Posterior cingulate gyrus (tissue), 11 donors: ENCODE measurements at regions of chrX and their contacts with region 1.

Region 1: GRCh38 chrX:141176586-141177451 is at the start of gene LDOC1:
- DNase-seq: peak; percentile 68 to 97 (median 83)

Region 2: DNA sequence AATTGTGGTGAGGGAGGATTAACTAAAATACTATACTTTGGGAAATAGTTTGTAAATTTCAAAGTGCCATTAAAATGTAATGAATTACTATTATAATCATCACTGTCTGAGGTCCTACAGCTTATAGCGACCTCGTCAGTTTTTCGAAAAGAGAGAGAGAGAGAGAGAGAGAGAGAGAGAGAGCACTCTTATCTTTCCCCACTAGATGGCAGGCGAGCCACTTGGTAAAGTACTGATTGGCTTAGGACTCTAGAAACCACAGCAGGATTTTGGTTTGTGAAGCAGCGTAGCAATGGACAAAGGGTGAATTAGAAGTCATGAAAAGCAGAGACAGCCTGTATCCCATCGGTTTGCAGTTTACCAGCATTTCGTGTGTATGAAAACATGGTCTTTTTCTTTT is 414.8 kb before region 1 on chrX:
- intact Hi-C with region 1: loop called (anchors 5 kb)
- DNase-seq: peak in 4 of 10 donors; percentile 20 to 41 (median 30)

Region 3: DNA sequence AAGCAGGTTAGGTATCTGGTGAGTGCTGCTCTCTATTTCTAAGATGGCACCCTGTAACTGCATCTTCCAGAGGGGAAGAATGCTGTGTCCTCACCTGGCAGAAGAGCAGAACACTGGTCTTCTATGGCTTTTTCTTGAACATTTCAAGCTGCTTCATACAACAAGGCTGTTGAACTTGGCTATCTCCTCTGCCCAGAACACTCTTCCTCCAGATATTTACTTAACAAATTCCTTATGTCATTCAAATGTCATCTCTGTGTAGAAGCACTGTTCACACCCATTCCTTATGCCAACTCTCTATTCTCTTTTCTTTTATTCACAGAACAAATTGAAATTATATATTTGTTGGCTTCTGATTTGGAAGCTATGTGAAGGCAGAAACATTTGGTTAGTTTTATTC is 54.4 kb before region 1 on chrX:
- intact Hi-C with region 1: no loop called
- DNase-seq: no peak